A549 (cell line): ENCODE measurements at regions of chr5 and their contacts with region 1.

Region 1: GRCh38 chr5:134411546-134412266 is at the start of gene CDKN2AIPNL:
- DNase-seq: peak; percentile 88 to 94
- ATAC-seq: peak; percentile 99
- H3K4me3 ChIP-seq: peak within 1 kb of the TSS; percentile 61
- H3K27ac ChIP-seq: peak within 1 kb of the TSS; percentile 93 to 94
- H3K4me1 ChIP-seq: peaks cover 36% of the 10 kb centered on the region
- CTCF ChIP-seq: peak; percentile 76
- EP300 ChIP-seq: no peak
- POLR2A ChIP-seq: peak; percentile 83
- RAD21 ChIP-seq: peak; percentile 67 to 87
- polyA plus RNA-seq, gene CDKN2AIPNL: 42.4 and 49.9 TPM in 2 replicates

Region 2: GRCh38 chr5:134380346-134380745 is 31.4 kb before region 1 on chr5:
- CTCF ChIA-PET with region 1: interaction called, 10 read pairs
- POLR2A ChIA-PET with region 1: no interaction called
- DNase-seq: no peak
- ATAC-seq: no peak
- H3K4me3 ChIP-seq: no peak overlapping the region
- H3K27ac ChIP-seq: no peak overlapping the region
- H3K4me1 ChIP-seq: no peaks in the 10 kb centered on the region
- CTCF ChIP-seq: no peak
- EP300 ChIP-seq: no peak
- POLR2A ChIP-seq: no peak
- RAD21 ChIP-seq: no peak

Region 3: GRCh38 chr5:134430001-134430569 is 18.4 kb after region 1 on chr5:
- CTCF ChIA-PET with region 1: interaction called, 24 read pairs
- POLR2A ChIA-PET with region 1: interaction called, 3 read pairs
- DNase-seq: no peak
- ATAC-seq: no peak
- H3K4me3 ChIP-seq: no peak overlapping the region
- H3K27ac ChIP-seq: no peak overlapping the region
- H3K4me1 ChIP-seq: peaks cover 6% of the 10 kb centered on the region; the same call in 2 of the 3 replicates
- CTCF ChIP-seq: no peak
- EP300 ChIP-seq: no peak
- POLR2A ChIP-seq: no peak
- RAD21 ChIP-seq: no peak

Region 4: DNA sequence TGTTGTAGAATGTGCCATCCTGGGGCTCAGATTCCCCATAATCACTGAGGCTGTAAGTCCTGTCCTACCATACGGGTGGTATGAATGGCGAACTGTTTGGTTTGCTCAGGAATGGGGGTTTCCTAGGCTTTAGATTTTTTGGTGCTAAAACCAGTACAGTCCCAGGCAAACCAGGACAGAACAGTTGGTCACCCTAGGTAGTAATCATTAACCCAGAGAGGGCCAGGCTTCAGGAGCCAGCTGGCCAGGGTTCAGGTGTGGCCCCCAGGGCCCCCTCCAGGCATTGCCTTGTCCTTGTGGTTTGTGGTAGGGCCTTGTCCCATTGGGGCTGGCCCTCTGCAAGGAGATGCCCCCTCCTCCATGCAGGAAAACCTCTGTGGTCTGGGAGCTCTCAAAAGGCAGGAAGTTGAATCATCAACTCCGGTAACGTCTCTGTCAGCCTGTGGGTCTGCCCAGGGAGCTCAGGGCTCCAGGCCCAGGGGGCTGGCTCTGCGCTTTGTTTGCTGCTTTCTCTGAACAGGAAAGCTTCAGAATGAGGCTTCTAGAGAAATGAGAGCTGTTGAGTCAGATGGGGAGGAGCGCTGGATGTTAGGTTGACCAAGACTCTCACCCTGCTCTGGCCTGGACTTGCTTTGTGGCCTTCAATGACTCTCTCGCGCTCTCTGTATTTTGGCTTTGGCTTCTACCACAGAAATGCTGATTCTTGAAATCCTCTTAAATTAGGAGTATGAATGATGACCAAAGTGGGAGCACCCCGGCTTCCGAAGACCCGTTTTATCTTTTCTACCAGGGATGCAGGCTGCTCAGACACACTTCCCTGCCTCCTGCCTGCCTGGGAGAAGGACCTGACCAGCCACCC is 91.6 kb after region 1 on chr5:
- CTCF ChIA-PET with region 1: interaction called, 24 read pairs
- POLR2A ChIA-PET with region 1: interaction called, 11 read pairs
- DNase-seq: peak; percentile 80 to 92
- ATAC-seq: peak; percentile 60 to 73
- H3K4me3 ChIP-seq: no peak overlapping the region
- H3K27ac ChIP-seq: peak overlapping the region; percentile 93 to 94
- H3K4me1 ChIP-seq: peaks cover 59% of the 10 kb centered on the region
- CTCF ChIP-seq: no peak
- EP300 ChIP-seq: 0 out of 5 replicates have a peak, but pooled peaks of 1 of the 2 experiments have one; percentile 26
- POLR2A ChIP-seq: peak; percentile 15; the same call in 1 of the 2 replicates
- RAD21 ChIP-seq: peak; percentile 35 to 36; a peak in 3 of 5 replicates

Region 5: DNA sequence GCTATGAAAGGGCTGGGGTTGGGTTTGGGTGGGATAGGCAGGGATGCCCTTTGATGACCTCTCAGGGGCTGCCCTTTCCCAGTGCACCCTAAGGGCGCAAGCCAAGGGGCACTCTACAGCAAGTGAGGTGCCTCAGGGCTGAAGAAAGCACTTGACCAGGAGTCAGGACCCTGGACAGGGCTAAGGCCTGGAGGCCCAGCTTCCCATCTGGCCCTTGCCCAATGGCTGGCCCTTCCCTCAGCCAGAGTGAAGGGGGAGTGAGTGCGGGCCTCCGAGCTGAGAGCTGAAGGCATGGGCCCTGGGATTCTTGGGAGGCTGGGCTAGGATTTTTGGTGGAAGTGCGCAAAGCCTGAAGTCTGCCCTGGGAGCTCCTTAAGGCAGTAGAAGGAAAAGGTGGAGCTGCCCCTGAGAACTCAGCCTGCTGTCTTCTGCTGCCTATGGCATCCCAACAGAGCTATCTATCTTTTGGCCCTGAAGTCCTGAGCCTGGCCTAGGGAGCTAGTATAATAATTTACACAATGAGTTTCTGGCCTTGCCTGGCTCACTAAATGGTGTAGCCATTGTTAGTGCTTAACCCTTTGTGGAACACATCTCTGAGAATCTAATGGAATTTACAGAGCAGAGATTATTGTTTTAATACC is 130.2 kb after region 1 on chr5:
- CTCF ChIA-PET with region 1: interaction called, 18 read pairs
- POLR2A ChIA-PET with region 1: no interaction called
- DNase-seq: no peak
- ATAC-seq: peak; percentile 45 to 56; a peak in 4 of 6 replicates
- H3K4me3 ChIP-seq: no peak overlapping the region
- H3K27ac ChIP-seq: no peak overlapping the region
- H3K4me1 ChIP-seq: 0 out of 3 replicates have a peak, but pooled peaks cover 2% of the 10 kb centered on the region
- CTCF ChIP-seq: no peak
- EP300 ChIP-seq: no peak
- POLR2A ChIP-seq: no peak
- RAD21 ChIP-seq: no peak

Region 6: GRCh38 chr5:134586866-134587524 is 175.3 kb after region 1 on chr5:
- CTCF ChIA-PET with region 1: interaction called, 75 read pairs
- POLR2A ChIA-PET with region 1: interaction called, 3 read pairs
- DNase-seq: peak; percentile 89 to 93
- ATAC-seq: peak; percentile 94
- H3K4me3 ChIP-seq: no peak overlapping the region
- H3K27ac ChIP-seq: peak overlapping the region; percentile 62 to 73
- H3K4me1 ChIP-seq: peaks cover 12% of the 10 kb centered on the region
- CTCF ChIP-seq: peak; percentile 94
- EP300 ChIP-seq: no peak
- POLR2A ChIP-seq: no peak
- RAD21 ChIP-seq: peak; percentile 90 to 95